Activated CD4-positive, alpha-beta memory T cell treated with anti-CD3 and anti-CD28 coated beads for 36 hours (primary cell): ENCODE measurements at regions of chr17 and their contacts with region 1.

Region 1: DNA sequence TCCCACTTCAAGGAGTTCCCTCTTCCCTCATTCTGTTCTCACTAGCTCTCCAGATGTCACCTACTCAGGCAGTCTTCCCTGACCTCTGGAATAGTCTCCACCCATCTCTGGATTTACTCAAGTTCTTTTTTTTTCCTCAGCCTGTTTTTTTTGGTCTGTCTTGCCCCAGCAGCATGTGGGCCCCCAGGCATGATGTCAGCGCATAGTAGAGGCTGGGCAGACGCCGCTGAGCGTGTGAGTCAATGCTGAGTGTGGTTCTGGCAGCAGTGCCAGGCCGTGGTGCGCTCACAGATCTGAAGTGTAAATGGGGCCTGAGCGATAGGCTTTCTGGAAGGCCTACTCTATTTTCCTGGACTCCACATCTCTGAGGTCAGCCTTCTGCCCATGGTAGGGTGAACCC is 2.7 kb upstream of the KCNJ18 start:
- DNase-seq: no peak
- H3K4me3 Mint-ChIP-seq: no peak overlapping the region
- H3K27ac Mint-ChIP-seq: no peak overlapping the region
- H3K4me1 Mint-ChIP-seq: no peaks in the 10 kb centered on the region
- H3K27me3 Mint-ChIP-seq: no peaks in the 10 kb centered on the region

Region 2: DNA sequence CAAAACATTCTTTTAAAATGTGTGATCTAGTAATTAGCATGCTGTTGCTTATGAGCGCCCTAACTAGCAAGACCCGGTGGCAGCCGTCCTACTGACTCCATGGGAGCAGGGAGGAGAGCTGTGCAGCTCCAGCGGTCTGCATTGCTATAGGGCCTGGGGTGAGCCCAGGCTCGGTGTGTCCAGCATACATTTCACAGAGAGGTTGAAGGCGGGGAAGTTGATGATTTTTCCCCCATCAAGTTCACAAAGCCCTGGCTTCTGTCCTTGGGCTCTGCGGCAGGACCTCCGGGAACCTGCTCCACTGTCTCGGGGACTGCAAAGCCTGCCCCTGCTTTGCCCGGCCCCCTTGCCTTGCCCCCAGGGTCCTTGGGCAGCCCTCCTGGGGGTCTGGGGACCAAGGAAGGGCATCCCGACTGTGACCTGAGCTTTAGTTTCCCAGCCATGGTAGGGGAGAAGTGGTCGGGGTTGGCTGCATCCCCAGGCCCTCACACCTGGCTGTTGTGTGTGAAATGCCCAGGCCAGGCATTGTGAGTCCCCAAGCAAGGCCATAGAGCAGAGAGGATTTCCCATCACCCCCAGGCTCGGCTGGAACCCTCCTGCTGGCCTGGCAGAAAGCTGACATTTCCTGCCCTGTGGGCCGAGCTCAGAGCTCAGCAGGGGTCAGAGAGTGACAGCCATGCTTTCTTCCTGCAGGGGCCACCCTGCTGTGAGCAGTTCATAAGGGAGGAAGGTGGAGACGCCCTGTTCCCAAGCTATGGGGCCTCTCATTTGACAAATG is 288.6 kb before region 1 on chr17:
- CTCF ChIA-PET with region 1: no interaction called
- POLR2A ChIA-PET with region 1: no interaction called
- intact Hi-C with region 1: loop called (anchors 5 kb)
- DNase-seq: no peak
- H3K4me3 Mint-ChIP-seq: no peak overlapping the region
- H3K27ac Mint-ChIP-seq: no peak overlapping the region
- H3K4me1 Mint-ChIP-seq: no peaks in the 10 kb centered on the region
- H3K27me3 Mint-ChIP-seq: no peaks in the 10 kb centered on the region

Region 3: GRCh38 chr17:21756856-21757619 is 67.4 kb after region 1 on chr17:
- CTCF ChIA-PET with region 1: no interaction called
- POLR2A ChIA-PET with region 1: no interaction called
- intact Hi-C with region 1: no loop called
- DNase-seq: no peak
- H3K4me3 Mint-ChIP-seq: no peak overlapping the region
- H3K27ac Mint-ChIP-seq: no peak overlapping the region
- H3K4me1 Mint-ChIP-seq: no peaks in the 10 kb centered on the region
- H3K27me3 Mint-ChIP-seq: no peaks in the 10 kb centered on the region